Activated naive CD8-positive, alpha-beta T cell treated with anti-CD3 and anti-CD28 coated beads, Interleukin-2, amount 10 ng/mL, durations not matched to agents 7 days and 5 days (primary cell): ENCODE measurements at regions of chr5 and their contacts with region 1.

Region 1: DNA sequence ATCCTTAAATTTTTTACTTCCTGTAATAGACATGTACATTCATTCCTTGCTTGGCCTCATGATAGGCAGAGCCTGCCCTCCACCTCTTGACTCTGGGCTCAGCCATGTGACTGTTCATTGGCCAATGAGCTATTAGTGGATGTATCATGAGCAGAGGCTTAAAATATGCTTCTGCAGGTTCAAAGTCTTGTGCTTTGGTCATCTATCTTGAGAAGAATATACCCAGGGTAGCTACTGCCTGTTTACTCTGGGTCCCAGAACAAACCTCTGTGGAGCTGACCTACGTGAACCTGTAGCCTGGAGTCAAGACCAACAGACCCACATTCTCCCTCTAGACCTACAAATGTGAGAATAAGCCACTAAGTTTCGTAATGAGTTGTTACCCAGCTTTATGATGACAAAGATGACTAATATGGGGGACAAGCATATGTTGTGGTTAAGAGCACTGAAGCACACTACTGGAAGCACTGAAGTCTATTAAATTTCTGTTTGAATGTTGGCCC is 244.4 kb downstream of the MAST4 start:
- DNase-seq: no peak
- ATAC-seq: peak; percentile 93
- H3K4me3 Mint-ChIP-seq: peak overlapping the region; percentile 41
- H3K27ac Mint-ChIP-seq: peak overlapping the region; percentile 81
- H3K4me1 Mint-ChIP-seq: peaks cover 51% of the 10 kb centered on the region
- H3K27me3 Mint-ChIP-seq: no peaks in the 10 kb centered on the region

Region 2: GRCh38 chr5:66661149-66661548 is 179.4 kb before region 1 on chr5:
- POLR2A ChIA-PET with region 1: no interaction called
- DNase-seq: no peak
- ATAC-seq: no peak
- H3K4me3 Mint-ChIP-seq: no peak overlapping the region
- H3K27ac Mint-ChIP-seq: no peak overlapping the region
- H3K4me1 Mint-ChIP-seq: peaks cover 3% of the 10 kb centered on the region
- H3K27me3 Mint-ChIP-seq: peaks cover 14% of the 10 kb centered on the region

Region 3: DNA sequence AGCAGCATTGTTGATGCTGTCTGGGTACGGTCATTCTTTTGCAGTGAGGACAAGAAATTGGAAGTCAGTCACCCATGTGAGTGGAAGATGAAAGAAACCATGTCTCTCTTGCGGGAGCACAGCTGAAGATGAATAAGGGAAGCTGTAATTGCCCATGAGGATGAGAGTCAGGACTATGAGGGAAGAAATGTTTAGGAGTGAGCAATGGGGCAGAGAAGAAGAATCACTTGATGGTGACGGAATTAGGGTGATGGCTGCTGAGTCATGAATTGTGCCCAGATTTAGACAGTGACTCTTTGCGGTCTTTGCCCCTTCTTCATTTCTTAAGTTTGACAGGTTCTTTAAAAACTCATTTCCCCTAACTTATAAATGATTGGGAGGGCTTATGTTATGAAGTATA is 61.0 kb before region 1 on chr5:
- POLR2A ChIA-PET with region 1: no interaction called
- DNase-seq: no peak
- ATAC-seq: no peak
- H3K4me3 Mint-ChIP-seq: no peak overlapping the region
- H3K27ac Mint-ChIP-seq: no peak overlapping the region
- H3K4me1 Mint-ChIP-seq: no peaks in the 10 kb centered on the region
- H3K27me3 Mint-ChIP-seq: peaks cover 13% of the 10 kb centered on the region

Region 4: GRCh38 chr5:66821688-66822429 is 18.7 kb before region 1 on chr5:
- POLR2A ChIA-PET with region 1: interaction called, 53 read pairs
- DNase-seq: peak; percentile 42
- ATAC-seq: peak; percentile 94
- H3K4me3 Mint-ChIP-seq: peak overlapping the region; percentile 71
- H3K27ac Mint-ChIP-seq: peak overlapping the region; percentile 93
- H3K4me1 Mint-ChIP-seq: peaks cover 32% of the 10 kb centered on the region
- H3K27me3 Mint-ChIP-seq: no peaks in the 10 kb centered on the region

Region 5: DNA sequence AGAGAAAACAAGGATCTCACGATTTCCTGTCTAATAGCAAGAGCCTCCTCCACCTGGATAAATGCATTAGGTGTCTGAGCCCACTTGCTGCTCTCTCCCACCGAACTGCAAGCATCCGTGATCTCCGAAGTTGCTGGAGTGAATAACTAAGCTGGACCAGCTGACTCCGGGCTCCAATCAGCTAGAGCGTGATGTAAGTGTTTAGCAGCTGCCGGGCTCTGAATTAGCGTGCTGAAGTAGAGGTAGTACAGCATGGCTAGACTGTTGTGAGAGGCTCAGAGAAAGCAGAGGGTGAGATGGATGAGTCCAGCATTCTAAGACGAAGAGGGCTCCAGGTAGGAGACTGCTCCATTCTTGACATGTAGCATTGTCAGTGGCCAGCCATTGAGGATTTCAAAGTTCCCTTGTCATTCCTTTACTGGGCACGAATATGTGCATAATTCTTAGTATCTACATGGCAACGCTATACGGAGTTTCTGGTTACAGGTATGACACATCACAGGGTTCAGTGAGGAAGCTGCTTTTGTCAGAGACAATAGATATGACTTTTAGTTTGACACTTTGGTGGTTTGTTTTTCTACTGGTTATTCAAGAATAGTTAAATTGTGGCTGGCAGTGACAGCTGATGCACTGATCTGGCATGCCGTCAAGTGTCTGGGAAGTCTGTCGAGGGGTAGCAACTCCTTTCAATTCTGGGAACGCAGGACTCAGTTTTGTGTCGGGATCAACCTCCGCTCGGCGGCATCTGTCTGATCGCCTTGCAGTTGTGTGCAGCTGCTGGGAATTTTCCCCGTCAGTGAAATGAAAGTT is 11.8 kb before region 1 on chr5:
- POLR2A ChIA-PET with region 1: interaction called, 53 read pairs
- DNase-seq: peak; percentile 61
- ATAC-seq: peak; percentile 98
- H3K4me3 Mint-ChIP-seq: peak overlapping the region; percentile 81
- H3K27ac Mint-ChIP-seq: peak overlapping the region; percentile 89
- H3K4me1 Mint-ChIP-seq: peaks cover 33% of the 10 kb centered on the region
- H3K27me3 Mint-ChIP-seq: peaks cover 6% of the 10 kb centered on the region

Region 6: GRCh38 chr5:66864331-66864840 is 23.8 kb after region 1 on chr5:
- POLR2A ChIA-PET with region 1: no interaction called
- DNase-seq: no peak
- ATAC-seq: peak; percentile 58
- H3K4me3 Mint-ChIP-seq: no peak overlapping the region
- H3K27ac Mint-ChIP-seq: no peak overlapping the region
- H3K4me1 Mint-ChIP-seq: peaks cover 3% of the 10 kb centered on the region
- H3K27me3 Mint-ChIP-seq: peaks cover 19% of the 10 kb centered on the region